HepG2 (cell line): ENCODE measurements at regions of chr9 and their contacts with region 1.

Region 1: GRCh38 chr9:9319007-9319406 is 1293.8 kb downstream of the PTPRD start:
- DNase-seq: no peak
- ATAC-seq: no peak
- H3K4me3 ChIP-seq: no peak overlapping the region
- H3K27ac ChIP-seq: no peak overlapping the region
- H3K4me1 ChIP-seq: no peaks in the 10 kb centered on the region
- H3K27me3 ChIP-seq: no peaks in the 10 kb centered on the region
- CTCF ChIP-seq: no peak
- EP300 ChIP-seq: no peak
- POLR2A ChIP-seq: no peak
- RAD21 ChIP-seq: no peak

Region 2: GRCh38 chr9:9352877-9353481 is 34.0 kb after region 1 on chr9:
- CTCF ChIA-PET with region 1: no interaction called
- POLR2A ChIA-PET with region 1: no interaction called
- in situ Hi-C with region 1: no loop called
- intact Hi-C with region 1: loop called (anchors 1 kb)
- DNase-seq: no peak
- ATAC-seq: no peak
- H3K4me3 ChIP-seq: no peak overlapping the region
- H3K27ac ChIP-seq: no peak overlapping the region
- H3K4me1 ChIP-seq: no peaks in the 10 kb centered on the region
- H3K27me3 ChIP-seq: no peaks in the 10 kb centered on the region
- CTCF ChIP-seq: 0 out of 2 replicates have a peak, but pooled peaks have one; percentile 11
- EP300 ChIP-seq: no peak
- POLR2A ChIP-seq: no peak
- RAD21 ChIP-seq: no peak